ENCODE measurements at regions of chr2 and their contacts with region 1.

Region 1: GRCh38 chr2:230913406-230914143 is 11.5 kb downstream of the GPR55 start:
- DNase-seq: peak; percentile 41
- H3K4me3 Mint-ChIP-seq: no peak overlapping the region
- H3K27ac Mint-ChIP-seq: no peak overlapping the region
- H3K4me1 Mint-ChIP-seq: peaks cover 48% of the 10 kb centered on the region
- H3K27me3 Mint-ChIP-seq: peaks cover 22% of the 10 kb centered on the region

Region 2: GRCh38 chr2:230864598-230865306 is 48.8 kb before region 1 on chr2 and contains the start of gene ITM2C:
- CTCF ChIA-PET with region 1: no interaction called
- POLR2A ChIA-PET with region 1: no interaction called
- intact Hi-C with region 1: loop called (anchors 2 kb)
- DNase-seq: peak; percentile 85
- H3K4me3 Mint-ChIP-seq: peak within 1 kb of the TSS; percentile 83
- H3K27ac Mint-ChIP-seq: no peak within 1 kb of the TSS
- H3K4me1 Mint-ChIP-seq: peaks cover 36% of the 10 kb centered on the region
- H3K27me3 Mint-ChIP-seq: peaks cover 8% of the 10 kb centered on the region
- total RNA-seq, gene ITM2C: 19.5 to 23.0 TPM

Region 3: DNA sequence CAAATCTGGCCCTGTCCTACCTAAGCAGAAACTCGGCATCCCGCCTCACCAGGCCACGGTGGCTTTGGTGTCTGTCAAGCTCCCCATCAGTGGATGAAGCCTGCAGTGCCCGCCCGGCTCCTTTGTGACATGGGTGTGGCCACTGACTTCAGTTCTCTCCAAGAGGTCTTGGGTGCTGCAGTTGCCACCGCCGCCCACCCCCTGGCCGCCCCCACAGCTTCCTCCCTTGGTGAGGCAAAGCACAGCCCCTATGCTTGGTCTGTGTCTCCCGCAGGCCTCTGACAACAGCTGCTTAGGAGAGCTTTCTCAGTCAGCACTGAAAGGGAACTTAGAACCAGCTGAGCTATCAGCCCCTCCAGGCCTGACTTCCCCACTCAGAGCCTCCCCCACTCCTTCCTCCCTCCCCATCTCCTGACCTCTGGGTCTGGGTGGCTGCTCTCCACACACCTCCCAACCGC is 34.4 kb after region 1 on chr2:
- CTCF ChIA-PET with region 1: interaction called, 3 read pairs
- POLR2A ChIA-PET with region 1: no interaction called
- intact Hi-C with region 1: loop called (anchors 1 kb)
- DNase-seq: no peak
- H3K4me3 Mint-ChIP-seq: no peak overlapping the region
- H3K27ac Mint-ChIP-seq: no peak overlapping the region
- H3K4me1 Mint-ChIP-seq: peaks cover 50% of the 10 kb centered on the region
- H3K27me3 Mint-ChIP-seq: peaks cover 19% of the 10 kb centered on the region

Region 4: GRCh38 chr2:231068525-231069222 is 155.1 kb after region 1 on chr2:
- CTCF ChIA-PET with region 1: no interaction called
- POLR2A ChIA-PET with region 1: no interaction called
- intact Hi-C with region 1: no loop called
- DNase-seq: peak; percentile 35
- H3K4me3 Mint-ChIP-seq: no peak overlapping the region
- H3K27ac Mint-ChIP-seq: no peak overlapping the region
- H3K4me1 Mint-ChIP-seq: peaks cover 16% of the 10 kb centered on the region
- H3K27me3 Mint-ChIP-seq: no peaks in the 10 kb centered on the region

Measured in activated CD4-positive, alpha-beta memory T cell treated with anti-CD3 and anti-CD28 coated beads for 36 hours (primary cell).